ENCODE measurements at regions of chr20 and their contacts with region 1.

Region 1: DNA sequence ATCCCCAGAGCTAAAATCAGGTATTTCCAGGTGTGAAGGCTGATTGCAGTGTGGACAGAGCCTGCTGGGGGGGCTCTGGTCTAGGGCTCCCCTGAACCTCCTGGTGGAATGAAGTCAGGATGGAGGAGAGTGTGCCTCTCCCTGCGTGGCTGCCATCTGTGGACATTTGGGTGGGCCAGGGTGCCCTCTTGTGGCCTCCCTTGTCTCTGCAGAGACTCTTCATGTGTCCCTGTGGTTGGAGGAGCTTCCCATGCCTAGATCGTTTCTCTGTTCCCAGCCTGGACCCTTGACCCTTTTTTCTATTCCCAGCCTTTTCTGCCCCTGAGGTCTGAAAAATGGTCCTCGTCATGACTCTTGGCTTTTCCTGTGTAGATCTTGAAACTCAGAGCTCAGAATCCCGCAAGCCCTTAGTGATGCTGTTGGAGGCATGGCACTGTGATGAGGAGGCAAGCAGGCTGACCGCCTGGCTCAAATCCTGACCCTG is 9.9 kb upstream of the PSMF1 start:
- H3K4me3 ChIP-seq: no peak overlapping the region
- H3K27ac ChIP-seq: no peak overlapping the region
- H3K4me1 ChIP-seq: no peaks in the 10 kb centered on the region
- CTCF ChIP-seq: peak; percentile 45

Region 2: GRCh38 chr20:956330-956951 is 152.0 kb before region 1 on chr20:
- CTCF ChIA-PET with region 1: interaction called, 26 read pairs
- POLR2A ChIA-PET with region 1: no interaction called
- H3K4me3 ChIP-seq: no peak overlapping the region
- H3K27ac ChIP-seq: no peak overlapping the region
- H3K4me1 ChIP-seq: no peaks in the 10 kb centered on the region
- CTCF ChIP-seq: peak; percentile 87

Region 3: GRCh38 chr20:1087311-1087905 is 21.1 kb before region 1 on chr20:
- CTCF ChIA-PET with region 1: interaction called, 10 read pairs
- POLR2A ChIA-PET with region 1: no interaction called
- H3K4me3 ChIP-seq: no peak overlapping the region
- H3K27ac ChIP-seq: no peak overlapping the region
- H3K4me1 ChIP-seq: no peaks in the 10 kb centered on the region
- CTCF ChIP-seq: no peak

Region 4: DNA sequence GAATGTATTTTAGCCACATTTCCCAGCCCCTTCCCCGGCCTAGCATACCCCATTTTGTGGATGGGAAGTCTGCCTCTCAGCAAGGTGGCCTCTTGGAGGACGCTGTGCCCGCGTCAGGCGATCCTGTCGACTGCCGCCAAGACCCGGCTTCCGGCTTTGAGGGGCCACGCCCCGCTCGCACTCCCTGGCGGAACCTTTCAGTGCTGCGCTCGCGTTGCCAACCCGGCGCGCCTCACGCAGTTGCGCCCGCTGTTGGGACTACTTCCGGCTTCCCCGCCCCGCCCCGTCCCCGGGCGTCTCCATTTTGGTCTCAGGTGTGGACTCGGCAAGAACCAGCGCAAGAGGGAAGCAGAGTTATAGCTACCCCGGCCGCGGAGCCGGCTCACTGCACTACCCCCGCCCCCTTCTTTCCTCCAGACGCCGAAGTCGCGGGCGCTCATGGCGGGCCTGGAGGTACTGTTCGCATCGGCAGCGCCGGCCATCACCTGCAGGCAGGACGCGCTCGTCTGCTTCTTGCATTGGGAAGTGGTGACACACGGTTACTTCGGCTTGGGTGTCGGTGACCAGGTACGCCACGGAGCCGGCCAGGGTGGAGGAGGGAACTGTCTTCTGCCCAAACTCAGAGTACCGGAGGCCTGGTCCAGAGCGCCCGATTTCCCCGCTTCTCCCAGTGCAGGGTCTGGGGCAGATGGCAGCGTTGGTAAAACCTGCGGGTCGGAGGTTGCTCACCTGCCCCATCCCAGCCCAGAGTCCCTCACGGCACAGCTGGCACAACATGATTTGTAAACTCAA is 10.1 kb after region 1 on chr20 and contains the start of gene PSMF1:
- CTCF ChIA-PET with region 1: interaction called, 20 read pairs
- POLR2A ChIA-PET with region 1: no interaction called
- H3K4me3 ChIP-seq: peak within 1 kb of the TSS; percentile 96
- H3K27ac ChIP-seq: peak within 1 kb of the TSS; percentile 76
- H3K4me1 ChIP-seq: peaks cover 37% of the 10 kb centered on the region
- CTCF ChIP-seq: peak; percentile 38; the same call in 1 of the 2 replicates

Region 5: DNA sequence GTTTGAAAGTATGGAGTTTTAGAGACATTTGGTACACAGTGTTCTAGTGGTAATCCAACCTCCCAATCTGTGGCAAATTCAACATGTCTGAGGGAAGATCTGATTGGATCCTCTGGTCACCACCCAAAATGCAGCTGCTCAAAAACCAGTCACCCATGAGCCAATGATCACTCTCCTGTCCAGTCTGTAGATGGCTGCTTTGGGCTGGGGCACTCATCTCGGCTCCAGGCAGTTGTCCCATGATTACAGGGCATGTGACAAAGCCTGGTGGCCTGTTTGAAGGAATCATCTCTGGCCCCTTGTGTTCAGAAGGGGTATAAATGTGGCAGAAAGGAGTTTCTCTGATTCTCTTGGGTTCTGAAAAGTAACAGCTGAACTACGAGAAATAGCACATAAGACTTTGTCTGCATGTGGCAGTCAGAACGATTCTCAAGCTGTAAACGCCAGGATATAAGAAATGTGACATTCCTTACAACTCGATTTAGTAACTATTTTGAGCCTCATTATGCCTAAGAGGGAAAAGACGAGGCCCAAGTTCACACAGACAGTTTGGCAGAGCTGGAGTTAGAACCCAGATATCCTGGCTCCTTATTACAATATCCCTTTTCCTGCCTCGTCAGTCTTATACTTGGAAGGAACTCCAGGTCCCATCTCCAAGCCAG is 90.9 kb after region 1 on chr20:
- CTCF ChIA-PET with region 1: no interaction called
- POLR2A ChIA-PET with region 1: no interaction called
- H3K4me3 ChIP-seq: no peak overlapping the region
- H3K27ac ChIP-seq: no peak overlapping the region
- H3K4me1 ChIP-seq: no peaks in the 10 kb centered on the region
- CTCF ChIP-seq: no peak

Measured in HEK293 (cell line).